Caco-2 (cell line): ENCODE measurements at regions of chr2 and their contacts with region 1.

Region 1: DNA sequence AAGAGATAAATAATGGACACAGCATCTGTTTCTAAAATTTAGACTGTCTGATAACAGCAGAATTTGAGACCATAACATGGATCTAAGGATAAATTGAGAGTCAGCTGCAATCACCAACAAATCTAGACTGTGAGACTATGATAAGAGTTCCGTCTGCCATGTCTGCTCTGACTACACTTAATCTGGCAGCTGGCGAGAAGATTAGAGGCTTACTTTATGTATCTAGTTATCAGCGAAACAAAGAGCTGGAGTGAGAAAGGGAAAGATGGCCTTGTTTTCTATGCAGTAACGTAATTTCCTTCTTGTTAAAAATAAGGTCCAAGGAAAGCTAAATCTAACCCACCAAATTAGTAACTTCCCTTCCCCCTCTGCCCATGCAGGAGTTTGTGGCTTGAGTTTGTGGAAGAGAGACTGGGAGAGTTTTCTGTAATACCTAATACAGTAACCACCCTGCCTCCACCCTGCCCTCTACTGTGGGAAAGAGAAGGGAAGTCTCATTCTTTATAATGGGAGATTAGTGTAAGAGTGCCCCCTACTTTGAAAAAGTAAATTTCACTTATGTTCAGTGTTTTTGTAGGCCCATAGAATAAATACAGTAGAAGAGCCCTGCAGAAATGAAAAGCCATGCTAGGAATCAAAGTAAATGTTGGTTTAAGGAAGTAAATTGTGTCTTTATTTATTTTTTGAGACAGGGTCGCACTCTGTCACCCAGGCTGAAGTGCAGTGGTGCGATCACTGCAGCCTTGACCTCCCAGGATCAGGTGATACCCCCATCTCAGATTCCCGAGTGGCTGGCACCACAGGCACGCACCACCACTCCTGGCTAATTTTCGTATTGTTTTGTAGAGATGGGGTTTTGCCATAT is 27.5 kb downstream of the EML4 start:
- DNase-seq: peak; percentile 68 to 77
- H3K4me3 ChIP-seq: no peak overlapping the region
- H3K4me3 Mint-ChIP-seq: peak overlapping the region; percentile 7
- H3K27ac Mint-ChIP-seq: peak overlapping the region; percentile 10
- H3K4me1 ChIP-seq: peaks cover 51% of the 10 kb centered on the region
- H3K4me1 Mint-ChIP-seq: peaks cover 56% of the 10 kb centered on the region
- H3K27me3 ChIP-seq: no peaks in the 10 kb centered on the region
- H3K27me3 Mint-ChIP-seq: no peaks in the 10 kb centered on the region
- CTCF ChIP-seq: peak; percentile 65 to 85

Region 2: DNA sequence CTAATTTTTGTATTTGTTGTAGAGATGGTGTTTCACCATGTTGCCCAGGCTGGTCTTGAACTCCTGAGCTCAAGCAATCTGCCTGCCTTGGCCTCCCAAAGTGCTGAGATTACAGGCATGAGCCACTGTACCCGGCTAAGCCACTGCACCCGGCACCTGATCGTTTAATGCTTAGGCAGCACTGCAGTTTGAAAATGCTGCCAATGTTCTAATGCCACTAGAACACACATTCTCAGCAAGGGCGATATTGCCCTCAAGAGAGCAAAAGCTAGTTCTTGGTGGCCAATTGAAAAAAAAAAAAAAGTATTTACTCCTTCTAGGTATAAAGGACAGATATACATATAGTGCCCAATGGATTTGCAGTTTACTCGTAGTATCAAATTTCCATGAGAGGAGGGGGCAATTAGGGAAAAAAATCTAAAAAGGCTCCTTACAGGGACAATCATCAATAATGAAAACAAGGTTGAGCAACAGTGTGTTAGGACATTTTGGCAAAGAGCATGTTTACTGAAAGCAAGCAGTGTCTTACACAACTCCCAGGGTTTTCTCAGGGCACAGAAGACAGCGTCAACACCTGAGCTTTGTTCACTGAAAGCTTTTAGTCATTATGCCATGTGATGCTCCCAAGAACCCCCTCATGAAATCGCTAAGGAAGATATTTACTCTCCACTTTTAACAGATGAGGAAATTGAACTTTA is 348.7 kb before region 1 on chr2:
- CTCF ChIA-PET with region 1: no interaction called
- POLR2A ChIA-PET with region 1: no interaction called
- intact Hi-C with region 1: loop called (anchors 5 kb)
- DNase-seq: peak in 1 of 2 experiments; percentile 65
- H3K4me3 ChIP-seq: no peak overlapping the region
- H3K4me3 Mint-ChIP-seq: no peak overlapping the region
- H3K27ac Mint-ChIP-seq: no peak overlapping the region
- H3K4me1 ChIP-seq: peaks cover 9% of the 10 kb centered on the region
- H3K4me1 Mint-ChIP-seq: peaks cover 15% of the 10 kb centered on the region
- H3K27me3 ChIP-seq: no peaks in the 10 kb centered on the region
- H3K27me3 Mint-ChIP-seq: no peaks in the 10 kb centered on the region
- CTCF ChIP-seq: no peak

Region 3: DNA sequence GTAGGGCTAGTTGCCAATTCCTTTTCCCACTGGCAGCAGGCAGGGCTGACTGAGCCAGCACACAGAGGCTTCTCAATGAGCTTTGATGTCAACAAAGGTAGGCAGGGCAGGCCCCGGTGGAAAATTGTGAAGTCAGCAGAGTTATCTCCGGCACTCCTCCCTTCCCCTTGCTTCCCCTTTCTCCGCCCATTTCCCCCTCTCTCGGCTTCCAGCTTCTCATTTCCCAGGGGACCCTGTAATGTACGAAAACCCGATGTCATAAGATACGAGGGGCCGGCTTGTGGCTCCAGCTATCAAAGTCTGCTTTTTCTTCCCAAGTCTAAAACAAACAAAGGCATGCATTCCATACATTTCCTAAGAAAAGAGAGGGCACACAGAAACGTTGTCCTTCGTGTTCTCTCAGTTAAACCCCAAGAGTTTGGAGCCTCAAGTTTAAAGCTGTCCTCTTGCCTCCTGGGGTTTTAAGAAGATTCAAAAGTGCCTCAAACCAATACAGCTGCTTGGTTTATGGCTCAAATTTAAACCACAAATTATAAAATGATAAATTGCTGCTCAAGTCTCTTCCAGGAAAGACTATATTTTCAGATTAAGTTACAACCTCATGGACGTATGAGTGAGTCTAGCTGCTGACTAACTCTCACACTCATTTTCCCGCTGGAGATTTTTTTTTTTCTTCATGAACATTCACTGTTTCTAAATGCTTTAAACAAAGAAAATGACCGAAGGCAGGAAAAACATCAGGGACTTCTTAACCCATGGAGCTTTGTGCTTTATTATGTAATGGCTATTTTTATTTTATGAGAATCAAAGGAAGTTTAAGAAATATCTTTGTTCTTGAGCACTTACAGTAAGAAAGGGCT is 54.7 kb before region 1 on chr2:
- CTCF ChIA-PET with region 1: interaction called, 7 read pairs
- POLR2A ChIA-PET with region 1: interaction called, 6 read pairs
- intact Hi-C with region 1: loop called (anchors 1 kb)
- DNase-seq: peak; percentile 91 to 96
- H3K4me3 ChIP-seq: peak overlapping the region; percentile 17
- H3K4me3 Mint-ChIP-seq: peak overlapping the region; percentile 71
- H3K27ac Mint-ChIP-seq: peak overlapping the region; percentile 95
- H3K4me1 ChIP-seq: peaks cover 53% of the 10 kb centered on the region
- H3K4me1 Mint-ChIP-seq: peaks cover 55% of the 10 kb centered on the region
- H3K27me3 ChIP-seq: no peaks in the 10 kb centered on the region
- H3K27me3 Mint-ChIP-seq: no peaks in the 10 kb centered on the region
- CTCF ChIP-seq: no peak

Region 4: DNA sequence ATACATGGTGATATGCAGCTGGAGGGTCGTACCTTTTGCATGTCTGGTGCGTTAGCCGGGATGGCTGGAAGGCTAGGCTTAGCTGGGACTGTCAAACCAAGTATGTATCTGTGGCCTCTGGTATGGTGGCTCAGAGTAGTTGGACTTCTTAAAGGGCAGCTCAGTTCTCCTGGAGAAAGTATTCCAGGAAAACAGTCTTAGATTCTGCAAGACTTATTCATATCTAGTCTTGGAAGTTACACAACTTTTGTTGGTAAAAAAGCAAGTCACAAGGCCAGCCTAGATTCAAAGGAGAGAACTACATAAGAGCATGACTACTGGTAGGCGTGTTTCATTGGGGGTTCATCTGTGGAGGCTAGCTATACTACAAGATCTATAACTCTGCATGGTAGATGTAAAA is 18.0 kb after region 1 on chr2:
- CTCF ChIA-PET with region 1: no interaction called
- POLR2A ChIA-PET with region 1: no interaction called
- intact Hi-C with region 1: loop called (anchors 2 kb)
- DNase-seq: no peak
- H3K4me3 ChIP-seq: no peak overlapping the region
- H3K4me3 Mint-ChIP-seq: no peak overlapping the region
- H3K27ac Mint-ChIP-seq: no peak overlapping the region
- H3K4me1 ChIP-seq: peaks cover 16% of the 10 kb centered on the region; the same call in 1 of the 2 replicates
- H3K4me1 Mint-ChIP-seq: peaks cover 6% of the 10 kb centered on the region
- H3K27me3 ChIP-seq: no peaks in the 10 kb centered on the region
- H3K27me3 Mint-ChIP-seq: no peaks in the 10 kb centered on the region
- CTCF ChIP-seq: no peak

Region 5: GRCh38 chr2:42238644-42239288 is 42.1 kb after region 1 on chr2:
- CTCF ChIA-PET with region 1: no interaction called
- POLR2A ChIA-PET with region 1: no interaction called
- intact Hi-C with region 1: loop called (anchors 1 kb)
- DNase-seq: peak; percentile 75 to 78
- H3K4me3 ChIP-seq: no peak overlapping the region
- H3K4me3 Mint-ChIP-seq: no peak overlapping the region
- H3K27ac Mint-ChIP-seq: no peak overlapping the region
- H3K4me1 ChIP-seq: peaks cover 33% of the 10 kb centered on the region
- H3K4me1 Mint-ChIP-seq: peaks cover 49% of the 10 kb centered on the region
- H3K27me3 ChIP-seq: no peaks in the 10 kb centered on the region
- H3K27me3 Mint-ChIP-seq: no peaks in the 10 kb centered on the region
- CTCF ChIP-seq: peak; percentile 51 to 55

Region 6: GRCh38 chr2:42328148-42328833 is 131.7 kb after region 1 on chr2:
- CTCF ChIA-PET with region 1: no interaction called
- POLR2A ChIA-PET with region 1: no interaction called
- intact Hi-C with region 1: loop called (anchors 5 kb)
- DNase-seq: no peak
- H3K4me3 ChIP-seq: no peak overlapping the region
- H3K4me3 Mint-ChIP-seq: no peak overlapping the region
- H3K27ac Mint-ChIP-seq: no peak overlapping the region
- H3K4me1 ChIP-seq: no peaks in the 10 kb centered on the region
- H3K4me1 Mint-ChIP-seq: no peaks in the 10 kb centered on the region
- H3K27me3 ChIP-seq: no peaks in the 10 kb centered on the region
- H3K27me3 Mint-ChIP-seq: no peaks in the 10 kb centered on the region
- CTCF ChIP-seq: peak in 1 of 2 experiments; percentile 21

Region 7: GRCh38 chr2:42474765-42475454 is 278.3 kb after region 1 on chr2:
- CTCF ChIA-PET with region 1: no interaction called
- POLR2A ChIA-PET with region 1: no interaction called
- intact Hi-C with region 1: no loop called
- DNase-seq: no peak
- H3K4me3 ChIP-seq: no peak overlapping the region
- H3K4me3 Mint-ChIP-seq: no peak overlapping the region
- H3K27ac Mint-ChIP-seq: no peak overlapping the region
- H3K4me1 ChIP-seq: no peaks in the 10 kb centered on the region
- H3K4me1 Mint-ChIP-seq: peaks cover 4% of the 10 kb centered on the region
- H3K27me3 ChIP-seq: no peaks in the 10 kb centered on the region
- H3K27me3 Mint-ChIP-seq: no peaks in the 10 kb centered on the region
- CTCF ChIP-seq: no peak

Region 8: GRCh38 chr2:43051316-43051715 is 854.7 kb after region 1 on chr2:
- CTCF ChIA-PET with region 1: no interaction called
- POLR2A ChIA-PET with region 1: no interaction called
- intact Hi-C with region 1: no loop called
- DNase-seq: no peak
- H3K4me3 ChIP-seq: no peak overlapping the region
- H3K4me3 Mint-ChIP-seq: no peak overlapping the region
- H3K27ac Mint-ChIP-seq: no peak overlapping the region
- H3K4me1 ChIP-seq: peaks cover 36% of the 10 kb centered on the region
- H3K4me1 Mint-ChIP-seq: peaks cover 41% of the 10 kb centered on the region
- H3K27me3 ChIP-seq: no peaks in the 10 kb centered on the region
- H3K27me3 Mint-ChIP-seq: no peaks in the 10 kb centered on the region
- CTCF ChIP-seq: no peak